Activated B cell treated with CpG ODN at 0.5 μM for 24 hours (primary cell): ENCODE measurements at regions of chr15 and their contacts with region 1.

Region 1: DNA sequence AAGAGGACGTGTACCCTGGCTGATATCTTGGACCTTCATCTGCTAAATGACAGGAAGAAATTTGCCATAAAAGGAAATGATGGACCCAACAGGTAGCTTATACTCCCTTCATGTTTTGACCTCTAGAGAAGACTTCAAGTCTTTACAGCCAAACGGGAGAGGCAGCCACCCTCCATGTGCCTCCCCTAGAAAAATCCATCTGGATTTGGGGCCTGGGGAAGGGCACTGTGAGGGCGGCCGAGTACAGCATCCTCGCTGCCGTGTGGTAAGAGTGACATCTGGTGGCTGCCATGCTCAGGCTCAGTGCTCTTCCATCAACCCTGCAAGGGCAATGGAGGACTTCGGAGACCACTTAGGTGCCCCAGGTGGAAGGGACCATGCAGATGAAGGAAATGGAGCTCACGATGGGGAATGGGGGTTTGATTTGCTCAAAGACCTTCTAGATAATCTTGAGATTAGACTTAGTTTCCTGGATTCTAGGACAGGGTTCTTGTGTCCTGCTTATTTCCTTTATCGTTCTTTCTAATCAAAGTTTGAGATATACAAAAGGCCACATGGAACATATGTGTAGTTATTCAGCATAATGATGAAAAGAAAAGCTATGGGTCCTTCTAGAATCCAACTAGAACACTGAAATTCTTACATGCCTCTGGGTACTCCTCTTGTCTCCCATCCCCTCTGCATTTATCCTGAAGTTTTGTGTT is 44.4 kb downstream of the AQP9 start:
- DNase-seq: no peak
- ATAC-seq: no peak
- H3K4me3 Mint-ChIP-seq: no peak overlapping the region
- H3K27ac Mint-ChIP-seq: no peak overlapping the region
- H3K4me1 Mint-ChIP-seq: no peaks in the 10 kb centered on the region
- H3K27me3 Mint-ChIP-seq: peaks cover 33% of the 10 kb centered on the region
- CTCF ChIP-seq: no peak

Region 2: GRCh38 chr15:57146506-57147201 is 1036.0 kb before region 1 on chr15:
- CTCF ChIA-PET with region 1: no interaction called
- POLR2A ChIA-PET with region 1: no interaction called
- intact Hi-C with region 1: no loop called
- DNase-seq: no peak
- ATAC-seq: no peak
- H3K4me3 Mint-ChIP-seq: peak overlapping the region; percentile 48
- H3K27ac Mint-ChIP-seq: no peak overlapping the region
- H3K4me1 Mint-ChIP-seq: peaks cover 16% of the 10 kb centered on the region
- H3K27me3 Mint-ChIP-seq: no peaks in the 10 kb centered on the region
- CTCF ChIP-seq: peak; percentile 42

Region 3: DNA sequence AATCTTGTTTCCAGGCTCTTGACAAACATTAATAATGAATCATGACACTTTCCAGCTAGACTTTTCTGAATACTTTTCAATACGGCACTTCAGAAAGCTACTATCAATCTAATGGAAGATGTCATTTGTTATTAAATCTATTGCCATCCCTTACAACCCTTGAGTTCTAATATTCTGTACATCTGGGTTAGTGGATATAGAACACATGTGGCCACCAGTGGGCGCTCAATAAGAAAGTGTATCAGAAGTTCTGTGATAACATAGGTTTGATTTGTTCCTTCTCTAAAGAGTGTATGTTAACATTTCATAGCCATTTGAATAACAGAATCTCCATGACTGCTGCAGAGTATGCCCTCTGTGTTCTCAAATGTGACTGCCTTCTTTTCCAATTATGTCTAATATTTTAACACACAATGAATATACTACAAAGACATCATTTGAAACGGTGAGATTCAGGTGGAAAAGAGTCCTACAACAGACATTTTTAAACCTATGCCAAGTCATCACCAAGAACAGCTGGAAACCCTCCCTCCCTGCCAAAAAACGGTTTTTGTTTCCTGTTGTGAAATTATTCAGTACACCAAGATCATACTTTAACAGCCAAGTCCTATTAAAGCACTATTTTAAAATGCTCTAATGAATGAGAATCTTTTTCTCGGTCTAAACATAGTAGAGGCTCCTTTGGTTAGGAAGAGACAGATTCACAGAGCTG is 139.3 kb before region 1 on chr15:
- CTCF ChIA-PET with region 1: no interaction called
- POLR2A ChIA-PET with region 1: no interaction called
- intact Hi-C with region 1: loop called (anchors 5 kb)
- DNase-seq: no peak
- ATAC-seq: no peak
- H3K4me3 Mint-ChIP-seq: no peak overlapping the region
- H3K27ac Mint-ChIP-seq: no peak overlapping the region
- H3K4me1 Mint-ChIP-seq: no peaks in the 10 kb centered on the region
- H3K27me3 Mint-ChIP-seq: peaks cover 11% of the 10 kb centered on the region
- CTCF ChIP-seq: no peak